ENCODE measurements at regions of chr2 and their contacts with region 1.

Region 1: DNA sequence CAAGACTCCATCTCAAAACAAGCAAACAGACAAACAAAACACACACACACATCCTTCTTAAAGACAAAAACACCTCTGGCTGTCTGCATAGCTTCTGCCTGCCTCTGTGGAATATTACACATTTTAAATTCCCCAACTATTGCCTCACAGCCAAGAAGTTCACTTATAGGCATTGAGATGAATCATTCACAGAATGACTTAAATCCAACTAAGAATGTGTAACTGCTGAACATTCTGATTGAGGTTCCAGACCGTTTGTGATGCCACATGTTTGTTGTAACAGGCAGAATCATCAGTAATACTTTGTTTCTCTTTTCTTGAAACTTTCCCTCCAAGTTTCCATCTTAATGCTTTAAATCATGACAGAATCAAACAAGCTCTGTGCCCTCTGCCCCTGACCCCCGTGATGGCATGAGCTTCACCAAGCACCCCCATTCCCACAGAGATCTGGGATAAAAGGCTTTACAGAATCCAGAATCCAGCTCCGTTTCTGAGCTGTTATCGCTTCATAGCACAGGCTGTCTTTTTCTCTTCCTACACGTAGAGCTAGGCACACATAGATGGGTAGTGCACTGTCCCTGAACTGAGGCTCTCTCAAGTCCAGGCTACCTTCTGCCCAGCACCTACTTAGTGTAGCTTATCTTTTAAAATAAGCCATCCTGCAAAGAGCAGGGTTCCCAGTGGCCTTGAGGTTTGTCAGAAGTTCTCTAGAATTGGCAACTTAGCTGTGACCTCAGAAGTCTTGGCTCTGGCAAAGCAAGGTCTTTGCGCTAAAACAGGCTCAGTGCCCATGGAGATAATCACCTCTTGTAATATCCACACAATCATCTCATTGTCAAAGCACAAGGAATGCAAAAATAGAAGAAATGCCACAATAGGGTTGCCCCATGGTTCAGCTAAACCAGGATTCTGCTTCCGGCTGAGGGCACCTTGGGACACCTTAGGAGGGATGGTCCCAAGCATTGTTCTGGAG is 32.9 kb downstream of the EPAS1 start:
- DNase-seq: no peak
- H3K4me3 ChIP-seq: no peak overlapping the region
- H3K27ac ChIP-seq: peak overlapping the region; percentile 100
- H3K4me1 ChIP-seq: peaks cover 61 to 94% of the 10 kb centered on the region in 2 experiments
- H3K27me3 ChIP-seq: no peaks in the 10 kb centered on the region
- CTCF ChIP-seq: no peak
- EP300 ChIP-seq: peak in 1 of 2 experiments; percentile 79; a peak in 2 of 4 replicates
- RAD21 ChIP-seq: no peak

Region 2: DNA sequence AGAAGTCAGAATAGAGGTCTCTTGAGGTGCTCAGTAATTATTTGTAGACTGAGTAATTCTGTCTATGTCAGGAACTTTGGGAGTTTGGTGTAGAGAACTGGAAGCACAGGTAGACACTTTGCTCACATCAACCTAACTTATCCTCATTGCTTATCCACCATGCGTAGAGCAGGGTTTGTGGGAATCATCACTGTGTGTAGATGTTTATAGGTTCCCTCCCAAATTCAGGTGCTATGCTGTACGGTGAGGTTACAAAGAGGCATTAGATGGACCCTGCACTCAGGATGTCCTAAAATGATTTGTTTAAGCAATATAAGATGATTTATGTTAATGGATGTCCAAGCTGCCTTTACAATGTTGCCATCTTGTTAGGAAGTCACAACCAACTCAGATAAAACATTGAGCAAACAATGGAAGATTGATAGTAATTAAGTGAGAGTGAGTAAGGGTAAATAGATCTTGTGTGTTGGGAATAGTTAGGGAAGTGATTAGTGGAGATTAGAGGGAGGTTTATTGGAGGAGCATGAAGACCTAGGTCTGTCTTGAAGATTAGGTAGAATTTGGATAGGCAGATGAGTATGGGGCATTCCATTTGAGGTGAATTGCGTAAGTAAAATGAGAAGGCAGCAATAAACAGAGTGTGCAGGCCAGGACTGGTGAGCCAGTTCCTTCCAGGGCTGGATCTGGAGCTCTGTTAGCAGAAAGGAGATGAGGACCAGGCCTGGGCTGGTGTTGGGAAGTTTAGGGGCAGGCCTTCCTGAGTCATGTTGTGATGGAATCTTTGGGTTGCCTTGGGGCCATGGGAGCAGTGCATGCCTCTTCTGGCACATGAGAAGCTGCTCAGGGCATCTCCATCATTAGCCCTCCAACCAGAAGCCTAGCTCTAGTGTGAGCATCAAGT is 20.8 kb before region 1 on chr2:
- CTCF ChIA-PET with region 1: interaction called, 22 read pairs
- POLR2A ChIA-PET with region 1: interaction called, 3 read pairs
- DNase-seq: no peak
- H3K4me3 ChIP-seq: no peak overlapping the region
- H3K27ac ChIP-seq: peak overlapping the region in 1 of 2 experiments; percentile 41; a peak in 1 of 4 replicates
- H3K4me1 ChIP-seq: peaks cover 20 to 75% of the 10 kb centered on the region in 2 experiments; a peak in 3 of 4 replicates
- H3K27me3 ChIP-seq: no peaks in the 10 kb centered on the region
- CTCF ChIP-seq: no peak
- EP300 ChIP-seq: no peak
- RAD21 ChIP-seq: no peak

Region 3: GRCh38 chr2:46315103-46315890 is 14.8 kb before region 1 on chr2:
- CTCF ChIA-PET with region 1: interaction called, 22 read pairs
- POLR2A ChIA-PET with region 1: interaction called, 6 read pairs
- DNase-seq: peak; percentile 50
- H3K4me3 ChIP-seq: peak overlapping the region in 1 of 2 experiments; percentile 25; a peak in 2 of 4 replicates
- H3K27ac ChIP-seq: peak overlapping the region; percentile 92 to 98
- H3K4me1 ChIP-seq: peaks cover 46 to 69% of the 10 kb centered on the region in 2 experiments
- H3K27me3 ChIP-seq: no peaks in the 10 kb centered on the region
- CTCF ChIP-seq: no peak
- EP300 ChIP-seq: peak; percentile 12 to 96; a peak in 3 of 4 replicates
- RAD21 ChIP-seq: no peak

Measured in SK-N-SH (cell line).